Activated naive CD4-positive, alpha-beta T cell treated with anti-CD3 and anti-CD28 coated beads for 36 hours (primary cell): ENCODE measurements at regions of chr11 and their contacts with region 1.

Region 1: DNA sequence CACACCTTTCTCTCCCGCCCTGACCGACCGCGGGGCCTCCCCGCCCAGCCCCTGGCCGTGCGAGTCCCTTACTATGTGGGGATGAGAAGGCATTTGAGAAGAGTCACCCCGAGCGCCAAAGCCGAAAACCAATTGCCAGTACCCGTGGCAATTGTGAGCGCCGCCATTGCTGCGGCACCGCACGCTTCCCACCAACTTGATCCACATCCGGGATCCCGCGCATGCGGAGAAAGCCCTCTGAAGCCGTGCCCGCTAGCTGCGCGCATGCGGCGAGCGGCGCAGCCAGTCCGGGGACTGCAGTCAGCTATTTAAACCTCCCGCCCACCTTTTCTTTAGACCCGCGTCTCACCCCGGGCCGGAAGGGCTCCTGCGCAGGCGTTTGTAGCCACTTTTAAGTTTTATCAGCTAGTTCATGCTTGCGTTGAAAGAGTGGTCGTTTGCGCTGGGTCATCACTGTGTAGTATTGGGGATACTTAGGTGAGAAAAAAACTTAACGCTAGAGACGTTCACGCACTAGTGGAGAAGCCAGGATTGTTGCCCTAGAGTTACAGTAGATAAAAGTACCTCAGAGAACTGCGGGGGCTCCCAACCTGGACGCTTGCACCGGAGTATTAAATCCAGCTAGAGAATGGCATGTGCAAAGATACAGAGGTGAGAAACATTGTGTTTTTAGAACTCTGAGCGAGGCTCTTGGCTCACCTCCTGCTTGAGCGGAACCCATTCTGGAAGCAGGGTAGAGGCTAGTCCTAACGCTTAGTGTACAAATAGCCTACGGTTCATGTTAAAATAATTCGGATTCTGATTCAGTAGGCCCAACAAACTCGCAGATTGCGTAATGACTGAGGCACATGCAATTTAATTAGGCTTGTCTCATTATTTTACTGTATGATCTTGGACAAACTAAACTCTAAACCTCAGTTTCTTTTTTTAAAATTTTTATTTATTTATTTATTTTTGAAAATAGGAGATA is at the start of gene ALG8:
- DNase-seq: peak; percentile 97
- H3K4me3 Mint-ChIP-seq: peak within 1 kb of the TSS; percentile 85
- H3K27ac Mint-ChIP-seq: peak within 1 kb of the TSS; percentile 90
- H3K4me1 Mint-ChIP-seq: peaks cover 33% of the 10 kb centered on the region
- H3K27me3 Mint-ChIP-seq: no peaks in the 10 kb centered on the region
- total RNA-seq, gene ALG8: 35.1 to 35.9 TPM

Region 2: DNA sequence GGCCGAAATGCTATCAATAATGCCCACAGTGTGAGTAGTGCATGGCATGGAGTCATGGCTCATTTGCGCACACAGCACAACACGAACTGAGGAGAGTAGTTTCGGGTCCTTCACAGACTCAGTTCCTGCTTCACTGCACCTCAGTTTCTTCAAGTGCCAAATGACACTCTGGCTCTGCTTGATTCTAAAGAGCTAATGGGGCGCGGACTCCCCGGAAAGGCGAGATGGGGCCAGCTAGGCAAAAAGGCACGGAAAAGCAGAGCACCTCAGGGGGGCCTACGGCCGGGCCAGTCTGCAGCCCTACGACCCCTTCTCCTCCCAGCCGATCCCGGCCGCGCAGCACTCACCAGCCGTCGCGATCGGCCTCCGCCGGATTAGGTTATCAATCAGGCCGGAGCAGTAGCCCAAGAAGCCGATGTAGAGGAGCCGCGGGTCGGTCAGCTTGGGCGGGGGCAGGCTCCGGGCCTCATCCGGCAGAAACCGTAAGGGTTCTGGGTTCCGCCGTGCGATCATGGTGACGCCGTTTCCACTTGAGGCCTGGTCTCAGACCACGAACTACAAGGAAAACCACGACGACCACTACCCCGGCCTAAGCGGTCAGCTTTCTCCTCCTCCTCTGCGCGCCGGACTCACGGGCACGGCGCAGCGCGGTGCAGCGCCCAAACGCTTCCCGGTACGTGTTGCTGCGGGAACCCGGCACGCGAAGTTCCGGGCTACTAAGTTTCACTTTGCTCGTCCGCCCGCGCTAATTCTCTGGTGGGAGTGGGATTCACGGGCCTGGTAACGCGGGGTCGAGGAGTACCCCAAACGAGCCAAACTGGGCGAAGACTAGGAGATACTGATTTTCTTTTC is 60.2 kb before region 1 on chr11 and contains the start of gene NDUFC2:
- CTCF ChIA-PET with region 1: no interaction called
- intact Hi-C with region 1: loop called (anchors 1 kb)
- DNase-seq: peak; percentile 75
- H3K4me3 Mint-ChIP-seq: peak within 1 kb of the TSS; percentile 92
- H3K27ac Mint-ChIP-seq: peak within 1 kb of the TSS; percentile 86
- H3K4me1 Mint-ChIP-seq: peaks cover 45% of the 10 kb centered on the region
- H3K27me3 Mint-ChIP-seq: no peaks in the 10 kb centered on the region
- total RNA-seq, gene NDUFC2: 180 to 183 TPM

Region 3: DNA sequence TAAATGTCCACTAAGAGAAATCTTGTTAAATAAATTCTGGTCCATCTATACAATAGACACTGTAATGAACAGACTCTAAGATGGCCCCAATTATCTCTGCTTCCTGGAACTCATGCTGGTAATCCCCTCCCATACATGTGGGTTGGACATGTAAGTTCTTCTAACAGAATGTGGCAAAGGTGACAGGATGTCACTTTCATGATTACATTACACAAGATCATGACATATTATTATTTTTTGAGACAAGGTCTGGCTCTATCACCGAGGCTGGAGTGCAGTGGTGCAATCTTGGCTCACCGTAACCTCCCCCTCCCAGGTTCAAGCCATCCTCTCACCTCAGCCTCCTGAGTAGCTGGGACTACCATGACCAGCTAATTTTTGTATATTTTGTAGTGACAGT is 45.5 kb before region 1 on chr11:
- CTCF ChIA-PET with region 1: no interaction called
- intact Hi-C with region 1: loop called (anchors 1 kb)
- DNase-seq: peak; percentile 54
- H3K4me3 Mint-ChIP-seq: no peak overlapping the region
- H3K27ac Mint-ChIP-seq: peak overlapping the region; percentile 73
- H3K4me1 Mint-ChIP-seq: peaks cover 13% of the 10 kb centered on the region
- H3K27me3 Mint-ChIP-seq: no peaks in the 10 kb centered on the region

Region 4: DNA sequence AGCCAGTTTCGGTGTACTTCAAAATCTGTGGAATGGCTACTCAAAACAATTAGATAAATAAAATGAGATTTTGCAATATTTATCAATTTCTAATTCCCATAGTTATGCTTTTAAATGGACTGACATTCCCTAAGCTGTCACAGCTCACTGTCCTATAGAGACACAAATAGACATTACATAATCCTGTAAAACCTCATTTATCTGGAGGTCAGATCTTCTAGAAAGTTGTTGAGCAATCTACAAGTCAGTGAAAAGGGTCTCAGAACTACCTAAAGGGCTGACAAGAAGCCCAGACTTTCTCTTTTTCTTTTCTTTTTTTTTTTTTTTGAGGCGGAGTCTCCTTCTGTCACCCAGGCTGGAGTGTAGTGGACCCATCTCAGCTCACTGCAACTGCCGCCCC is 12.3 kb before region 1 on chr11:
- CTCF ChIA-PET with region 1: no interaction called
- intact Hi-C with region 1: no loop called
- DNase-seq: no peak
- H3K4me3 Mint-ChIP-seq: no peak overlapping the region
- H3K27ac Mint-ChIP-seq: no peak overlapping the region
- H3K4me1 Mint-ChIP-seq: peaks cover 9% of the 10 kb centered on the region
- H3K27me3 Mint-ChIP-seq: no peaks in the 10 kb centered on the region

Region 5: GRCh38 chr11:78202733-78203167 is 63.0 kb after region 1 on chr11:
- CTCF ChIA-PET with region 1: interaction called, 4 read pairs
- intact Hi-C with region 1: loop called (anchors 1 kb)
- DNase-seq: peak; percentile 73
- H3K4me3 Mint-ChIP-seq: peak overlapping the region; percentile 59
- H3K27ac Mint-ChIP-seq: peak overlapping the region; percentile 95
- H3K4me1 Mint-ChIP-seq: peaks cover 43% of the 10 kb centered on the region
- H3K27me3 Mint-ChIP-seq: no peaks in the 10 kb centered on the region

Region 6: DNA sequence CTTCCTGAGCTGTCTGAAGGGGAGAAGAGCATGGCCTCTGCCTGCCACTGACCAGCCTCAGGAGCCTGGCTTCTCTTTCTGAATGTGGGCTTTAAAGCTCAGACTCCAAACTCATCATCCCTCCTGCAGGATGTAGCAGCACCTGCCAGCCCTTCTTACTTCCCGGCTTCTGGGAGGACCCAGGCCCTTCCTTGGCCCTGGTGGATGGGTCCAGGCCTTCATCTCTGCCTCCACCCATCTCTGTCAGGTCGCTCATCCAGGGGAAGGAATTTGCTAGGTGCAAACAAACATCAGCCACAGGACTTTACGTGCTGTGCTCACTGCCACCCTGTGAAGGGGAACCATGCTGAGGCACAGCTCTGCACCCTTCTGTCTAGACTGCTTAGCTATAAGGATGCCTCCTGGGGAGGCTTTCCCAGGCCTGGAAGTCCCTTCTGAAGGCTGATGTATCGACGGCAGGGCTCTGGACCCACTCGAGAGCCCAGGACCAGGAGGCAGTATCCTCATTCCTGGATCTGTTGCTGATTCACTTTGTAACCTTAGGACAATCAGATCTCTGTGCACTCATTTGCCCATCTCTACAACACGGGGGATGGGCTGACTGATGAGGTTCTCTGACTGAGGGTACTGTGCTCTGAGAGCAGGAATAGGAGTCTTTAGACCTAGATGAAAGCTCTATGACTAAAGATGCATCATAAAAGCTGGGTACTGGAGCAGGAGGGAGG is 79.9 kb after region 1 on chr11:
- CTCF ChIA-PET with region 1: interaction called, 3 read pairs
- intact Hi-C with region 1: loop called (anchors 1 kb)
- DNase-seq: peak; percentile 50
- H3K4me3 Mint-ChIP-seq: no peak overlapping the region
- H3K27ac Mint-ChIP-seq: no peak overlapping the region
- H3K4me1 Mint-ChIP-seq: peaks cover 14% of the 10 kb centered on the region
- H3K27me3 Mint-ChIP-seq: no peaks in the 10 kb centered on the region

Region 7: GRCh38 chr11:78295991-78296935 is 156.6 kb after region 1 on chr11:
- CTCF ChIA-PET with region 1: no interaction called
- intact Hi-C with region 1: no loop called
- DNase-seq: no peak
- H3K4me3 Mint-ChIP-seq: no peak overlapping the region
- H3K27ac Mint-ChIP-seq: no peak overlapping the region
- H3K4me1 Mint-ChIP-seq: peaks cover 16% of the 10 kb centered on the region
- H3K27me3 Mint-ChIP-seq: no peaks in the 10 kb centered on the region

Region 8: GRCh38 chr11:78564490-78565467 is 425.1 kb after region 1 on chr11:
- CTCF ChIA-PET with region 1: interaction called, 4 read pairs
- intact Hi-C with region 1: loop called (anchors 2 kb)
- DNase-seq: peak; percentile 54
- H3K4me3 Mint-ChIP-seq: no peak overlapping the region
- H3K27ac Mint-ChIP-seq: no peak overlapping the region
- H3K4me1 Mint-ChIP-seq: peaks cover 27% of the 10 kb centered on the region
- H3K27me3 Mint-ChIP-seq: no peaks in the 10 kb centered on the region

Region 9: DNA sequence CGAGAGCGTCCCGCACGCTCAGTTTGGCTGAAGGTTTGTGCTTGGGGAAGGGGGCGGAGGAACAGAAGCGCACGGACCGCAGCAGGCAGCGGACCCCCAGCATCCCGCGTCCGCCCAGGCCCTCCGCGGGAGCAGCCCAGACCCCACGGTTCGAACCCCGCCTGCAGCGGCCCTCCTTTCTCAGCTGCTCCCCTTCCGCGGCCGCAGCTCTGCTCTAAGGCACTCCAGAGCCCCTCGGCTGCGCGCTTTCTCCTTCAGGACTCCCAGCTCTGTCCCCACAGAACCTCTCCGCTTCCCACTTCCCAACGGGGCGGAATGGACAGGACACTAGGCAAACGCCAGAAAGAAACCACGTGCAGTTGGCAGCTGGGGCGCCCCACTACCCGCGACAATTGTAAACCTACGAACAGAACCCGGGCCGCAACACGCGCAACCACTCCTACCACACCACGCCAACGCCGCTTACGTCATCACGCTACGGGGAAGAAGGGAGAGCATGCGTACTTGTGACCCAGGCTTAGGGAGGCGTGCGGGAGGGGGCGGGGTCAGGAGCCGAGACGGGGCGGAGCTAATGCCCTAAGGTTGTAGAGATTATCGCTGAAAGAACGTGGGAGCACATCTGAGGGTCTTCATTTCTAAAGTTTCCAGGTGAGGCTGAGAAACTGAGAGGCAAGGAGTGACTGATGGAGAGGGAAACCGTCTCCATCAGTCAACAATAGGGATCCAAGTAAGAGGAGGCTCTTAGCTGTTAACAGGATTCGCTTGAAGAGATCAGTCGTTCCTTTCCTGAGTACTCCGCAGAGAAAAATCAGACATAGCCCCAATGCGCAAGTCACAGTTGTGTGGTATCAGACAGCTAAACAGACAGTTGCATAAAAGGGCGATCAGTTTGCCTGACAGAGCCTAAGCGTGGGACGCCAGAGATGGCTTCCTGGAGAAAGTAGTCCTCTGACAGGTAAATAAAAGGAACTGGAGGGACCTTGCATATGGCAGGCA is 435.0 kb after region 1 on chr11 and contains the start of gene NARS2:
- CTCF ChIA-PET with region 1: no interaction called
- intact Hi-C with region 1: loop called (anchors 2 kb)
- DNase-seq: peak; percentile 99
- H3K4me3 Mint-ChIP-seq: peak within 1 kb of the TSS; percentile 92
- H3K27ac Mint-ChIP-seq: peak within 1 kb of the TSS; percentile 84
- H3K4me1 Mint-ChIP-seq: peaks cover 23% of the 10 kb centered on the region
- H3K27me3 Mint-ChIP-seq: no peaks in the 10 kb centered on the region
- total RNA-seq, gene NARS2: 27.7 to 28.3 TPM